ENCODE measurements at regions of chr2 and their contacts with region 1.

Region 1: GRCh38 chr2:65070172-65070830 is 14.1 kb downstream of the CEP68 start:
- DNase-seq: no peak

Region 2: DNA sequence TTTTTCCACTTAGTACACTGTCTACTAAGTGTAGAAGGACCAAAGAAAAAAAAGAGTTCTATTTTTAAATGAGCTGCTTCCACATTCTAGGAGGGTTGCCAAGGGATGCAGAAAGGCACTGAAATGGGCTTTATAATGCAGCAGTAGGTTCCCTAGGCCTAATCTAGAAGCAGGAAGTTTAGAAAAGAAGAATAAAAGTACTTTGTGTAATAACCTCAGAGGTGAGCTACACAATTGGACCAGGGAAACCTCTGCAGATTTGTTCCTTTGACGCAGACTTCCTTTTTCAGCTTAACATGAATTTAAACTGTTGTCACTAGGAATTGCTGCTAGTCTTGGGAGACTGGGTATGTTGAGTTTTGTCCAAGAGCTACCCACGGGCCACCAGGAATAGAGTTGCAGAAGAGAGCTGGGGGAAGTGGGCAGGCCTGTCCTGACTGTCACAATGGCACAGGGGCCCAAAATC is 94.2 kb after region 1 on chr2:
- in situ Hi-C with region 1: loop called (anchors 10 kb)
- DNase-seq: peak; percentile 56

Measured in KBM-7 (cell line).